ENCODE measurements at regions of chr20 and their contacts with region 1.

Region 1: DNA sequence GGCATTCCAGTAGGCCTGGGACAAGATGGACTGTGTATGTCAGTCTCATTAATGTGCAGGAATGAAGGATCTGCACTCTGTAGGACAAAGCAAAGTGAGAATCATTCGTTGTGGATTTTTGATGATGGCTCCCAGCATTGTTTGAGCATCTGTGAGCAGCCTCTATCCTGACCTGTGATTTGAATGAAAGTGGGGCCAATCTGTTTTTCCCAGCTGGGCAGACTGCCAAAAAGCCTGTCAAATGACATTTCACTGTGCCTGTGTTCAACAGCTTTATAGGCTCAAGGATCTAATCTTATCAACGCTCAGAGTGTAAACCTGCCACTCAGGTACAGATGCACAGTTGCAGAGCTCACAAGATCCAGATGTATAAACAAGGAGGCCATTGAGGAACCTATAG is 86.7 kb upstream of the SYNDIG1 start:
- DNase-seq: no peak
- H3K4me3 ChIP-seq: no peak overlapping the region
- H3K27ac ChIP-seq: no peak overlapping the region
- H3K4me1 ChIP-seq: peaks cover 8% of the 10 kb centered on the region
- H3K27me3 ChIP-seq: no peaks in the 10 kb centered on the region
- CTCF ChIP-seq: no peak

Region 2: GRCh38 chr20:24366336-24367004 is 16.3 kb before region 1 on chr20:
- CTCF ChIA-PET with region 1: no interaction called
- POLR2A ChIA-PET with region 1: no interaction called
- intact Hi-C with region 1: loop called (anchors 2 kb)
- DNase-seq: no peak
- H3K4me3 ChIP-seq: no peak overlapping the region
- H3K27ac ChIP-seq: no peak overlapping the region
- H3K4me1 ChIP-seq: no peaks in the 10 kb centered on the region
- H3K27me3 ChIP-seq: no peaks in the 10 kb centered on the region
- CTCF ChIP-seq: no peak

Region 3: GRCh38 chr20:24497851-24498250 is 115.1 kb after region 1 on chr20:
- CTCF ChIA-PET with region 1: no interaction called
- POLR2A ChIA-PET with region 1: no interaction called
- intact Hi-C with region 1: no loop called
- DNase-seq: no peak
- H3K4me3 ChIP-seq: no peak overlapping the region
- H3K27ac ChIP-seq: no peak overlapping the region
- H3K4me1 ChIP-seq: no peaks in the 10 kb centered on the region
- H3K27me3 ChIP-seq: no peaks in the 10 kb centered on the region
- CTCF ChIP-seq: no peak

Region 4: GRCh38 chr20:24667689-24668402 is 285.1 kb after region 1 on chr20:
- CTCF ChIA-PET with region 1: no interaction called
- POLR2A ChIA-PET with region 1: interaction called, 25 read pairs
- intact Hi-C with region 1: no loop called
- DNase-seq: peak in 1 of 2 experiments; percentile 52
- H3K4me3 ChIP-seq: no peak overlapping the region
- H3K27ac ChIP-seq: no peak overlapping the region
- H3K4me1 ChIP-seq: peaks cover 26% of the 10 kb centered on the region
- H3K27me3 ChIP-seq: no peaks in the 10 kb centered on the region
- CTCF ChIP-seq: no peak

Measured in PC-9 (cell line).